Panc1 (cell line): ENCODE measurements at regions of chr4 and their contacts with region 1.

Region 1: DNA sequence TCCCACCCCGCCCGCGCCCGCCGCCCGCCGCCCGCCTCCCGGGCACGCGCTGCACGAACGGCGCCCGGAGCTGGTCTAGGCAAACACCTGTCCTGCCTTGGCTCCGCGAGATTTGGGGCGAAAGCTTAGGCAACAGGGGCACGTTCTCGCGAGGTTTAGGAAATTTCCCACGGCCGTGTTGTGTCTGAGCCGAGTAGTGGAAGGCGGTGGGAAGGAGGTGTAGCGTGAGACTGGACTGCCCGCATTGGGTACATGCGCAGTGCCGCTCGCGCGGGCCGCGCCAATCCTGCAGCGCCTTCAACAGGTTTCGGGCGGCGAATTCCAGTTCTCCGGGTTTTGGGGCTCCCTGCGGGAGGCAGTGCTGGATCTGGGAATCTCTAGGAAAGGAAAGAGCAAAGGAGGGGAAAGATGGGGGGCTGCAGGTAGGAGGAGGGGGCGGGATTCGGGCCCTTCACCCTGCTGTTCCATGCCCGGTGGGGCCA is 1.3 kb upstream of the RBPJ start:
- DNase-seq: peak; percentile 96
- ATAC-seq: peak; percentile 88
- H3K4me3 ChIP-seq: peak overlapping the region; percentile 78 to 91
- H3K27ac ChIP-seq: peak overlapping the region; percentile 84; the same call in 1 of the 2 replicates
- H3K4me1 ChIP-seq: peaks cover 4% of the 10 kb centered on the region
- H3K27me3 ChIP-seq: no peaks in the 10 kb centered on the region
- CTCF ChIP-seq: peak; percentile 30

Region 2: DNA sequence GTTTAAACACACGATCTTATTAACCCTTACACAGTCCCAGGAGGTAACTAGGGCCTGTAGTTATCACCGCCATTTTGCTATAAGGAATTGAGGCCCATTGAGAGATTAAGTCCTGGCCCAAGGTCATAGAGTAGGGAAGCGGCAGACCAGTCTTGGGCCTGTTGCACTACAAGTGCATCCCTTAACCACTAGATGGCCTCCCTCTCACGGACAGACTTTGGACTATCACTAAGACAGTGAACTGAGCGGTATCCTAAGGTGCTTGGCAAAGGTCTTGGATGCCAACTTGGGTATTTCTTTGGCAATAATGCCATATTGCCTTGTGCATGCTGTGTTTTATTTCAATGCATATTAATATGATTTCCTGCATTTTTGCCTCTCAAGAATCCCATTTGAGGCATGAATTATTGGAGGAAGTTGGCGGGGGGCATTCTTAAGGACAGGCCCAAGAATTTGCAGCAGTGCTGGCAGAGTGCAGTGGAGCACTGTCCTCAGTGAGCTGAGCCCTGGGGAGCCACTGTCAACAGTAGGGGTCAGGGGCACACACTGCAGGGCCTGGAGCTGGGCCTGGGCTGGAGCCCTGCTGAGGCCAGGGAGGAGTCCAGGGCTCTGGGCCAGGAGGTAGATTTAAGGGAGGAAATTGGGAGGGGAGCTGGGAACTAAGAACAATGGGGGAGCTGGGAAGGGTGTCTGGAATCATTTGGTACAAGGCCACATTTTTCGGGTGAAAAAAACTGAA is 258.1 kb before region 1 on chr4:
- CTCF ChIA-PET with region 1: no interaction called
- POLR2A ChIA-PET with region 1: no interaction called
- in situ Hi-C with region 1: no loop called
- intact Hi-C with region 1: loop called (anchors 10 kb)
- DNase-seq: peak; percentile 28
- ATAC-seq: peak; percentile 96
- H3K4me3 ChIP-seq: no peak overlapping the region
- H3K27ac ChIP-seq: no peak overlapping the region
- H3K4me1 ChIP-seq: no peaks in the 10 kb centered on the region
- H3K27me3 ChIP-seq: no peaks in the 10 kb centered on the region
- CTCF ChIP-seq: peak; percentile 77

Region 3: DNA sequence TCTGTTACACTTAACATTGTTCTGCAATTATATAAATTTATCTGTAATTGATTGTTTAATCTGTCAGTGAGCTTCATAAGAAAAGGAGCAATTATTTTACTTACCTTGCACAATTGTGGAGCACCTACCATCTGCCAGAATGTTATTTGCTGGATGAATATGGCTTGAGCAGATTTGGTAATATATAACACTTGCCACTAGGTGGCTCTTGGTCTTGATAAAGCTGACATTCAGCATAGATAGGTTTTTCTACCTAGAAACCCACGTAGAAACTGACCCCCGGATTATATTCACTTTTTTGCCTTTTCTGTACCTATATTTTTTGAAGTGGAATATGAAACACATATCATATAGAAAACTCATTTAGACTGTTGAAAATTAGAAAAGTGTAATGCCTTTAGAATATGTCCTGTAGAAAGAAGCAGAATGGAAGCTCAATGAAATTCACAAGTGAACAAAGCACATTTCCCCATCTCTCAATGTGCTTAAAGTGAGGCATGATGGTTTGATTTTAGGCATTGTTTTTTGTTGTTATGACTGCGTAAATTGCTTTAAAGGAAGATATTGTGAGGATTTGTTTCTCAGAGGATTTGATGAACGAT is 10.8 kb after region 1 on chr4:
- CTCF ChIA-PET with region 1: interaction called, 10 read pairs
- POLR2A ChIA-PET with region 1: no interaction called
- in situ Hi-C with region 1: no loop called
- intact Hi-C with region 1: no loop called
- DNase-seq: no peak
- ATAC-seq: peak; percentile 91
- H3K4me3 ChIP-seq: no peak overlapping the region
- H3K27ac ChIP-seq: no peak overlapping the region
- H3K4me1 ChIP-seq: peaks cover 4% of the 10 kb centered on the region; the same call in 1 of the 2 replicates
- H3K27me3 ChIP-seq: no peaks in the 10 kb centered on the region
- CTCF ChIP-seq: peak; percentile 66; the same call in 1 of the 2 replicates